OCI-LY7 (cell line): ENCODE measurements at regions of chr11 and their contacts with region 1.

Region 1: GRCh38 chr11:46114961-46115360 is 6.3 kb downstream of the PHF21A start:
- DNase-seq: no peak
- H3K4me3 ChIP-seq: no peak overlapping the region
- H3K27ac ChIP-seq: peak overlapping the region; percentile 31
- H3K4me1 ChIP-seq: peaks cover 48% of the 10 kb centered on the region
- CTCF ChIP-seq: no peak

Region 2: DNA sequence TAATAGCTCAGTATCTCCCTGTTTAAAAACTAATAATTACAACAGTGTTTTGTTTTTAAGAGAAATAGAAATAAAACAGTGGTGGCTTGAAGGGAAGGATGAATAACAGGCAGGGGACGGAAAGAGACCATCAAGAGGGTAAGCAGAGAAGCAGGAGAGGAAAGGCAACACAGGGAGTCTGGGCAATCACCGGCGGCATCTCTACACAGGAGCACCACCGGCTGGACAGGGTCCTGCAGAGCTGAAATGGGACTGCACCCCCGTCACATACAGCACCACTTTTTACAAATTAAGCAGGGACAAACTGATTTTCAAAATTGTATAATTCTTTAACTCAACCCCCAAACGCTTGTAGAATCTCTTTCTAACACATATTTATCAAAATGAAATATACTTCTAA is 12.1 kb before region 1 on chr11:
- CTCF ChIA-PET with region 1: no interaction called
- POLR2A ChIA-PET with region 1: interaction called, 12 read pairs
- intact Hi-C with region 1: no loop called
- DNase-seq: no peak
- H3K4me3 ChIP-seq: no peak overlapping the region
- H3K27ac ChIP-seq: no peak overlapping the region
- H3K4me1 ChIP-seq: peaks cover 17% of the 10 kb centered on the region
- CTCF ChIP-seq: no peak

Region 3: DNA sequence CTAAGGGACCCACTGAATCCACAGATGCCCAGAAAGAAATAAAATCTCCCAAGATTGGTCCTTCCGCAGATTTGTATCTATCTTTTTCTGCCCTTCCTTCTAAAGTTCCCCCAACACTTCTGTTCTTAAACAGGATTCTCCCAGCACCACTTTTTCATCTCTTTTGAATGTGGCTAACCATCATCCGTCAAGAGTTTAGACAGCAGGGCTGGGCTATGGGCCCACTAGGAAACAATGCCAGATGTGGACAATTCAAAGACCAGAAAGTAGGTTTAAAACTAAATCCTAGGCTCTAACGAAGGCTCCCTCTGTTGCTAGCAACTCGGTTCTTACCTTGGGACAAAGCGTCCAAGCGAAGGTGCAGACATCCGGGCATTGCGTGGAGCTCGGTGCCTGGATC is 378.8 kb after region 1 on chr11:
- CTCF ChIA-PET with region 1: no interaction called
- POLR2A ChIA-PET with region 1: no interaction called
- intact Hi-C with region 1: no loop called
- DNase-seq: no peak
- H3K4me3 ChIP-seq: no peak overlapping the region
- H3K27ac ChIP-seq: no peak overlapping the region
- H3K4me1 ChIP-seq: no peaks in the 10 kb centered on the region
- CTCF ChIP-seq: no peak